Adrenal gland (tissue), 19 donors: ENCODE measurements at regions of chr7 and their contacts with region 1.

Region 1: DNA sequence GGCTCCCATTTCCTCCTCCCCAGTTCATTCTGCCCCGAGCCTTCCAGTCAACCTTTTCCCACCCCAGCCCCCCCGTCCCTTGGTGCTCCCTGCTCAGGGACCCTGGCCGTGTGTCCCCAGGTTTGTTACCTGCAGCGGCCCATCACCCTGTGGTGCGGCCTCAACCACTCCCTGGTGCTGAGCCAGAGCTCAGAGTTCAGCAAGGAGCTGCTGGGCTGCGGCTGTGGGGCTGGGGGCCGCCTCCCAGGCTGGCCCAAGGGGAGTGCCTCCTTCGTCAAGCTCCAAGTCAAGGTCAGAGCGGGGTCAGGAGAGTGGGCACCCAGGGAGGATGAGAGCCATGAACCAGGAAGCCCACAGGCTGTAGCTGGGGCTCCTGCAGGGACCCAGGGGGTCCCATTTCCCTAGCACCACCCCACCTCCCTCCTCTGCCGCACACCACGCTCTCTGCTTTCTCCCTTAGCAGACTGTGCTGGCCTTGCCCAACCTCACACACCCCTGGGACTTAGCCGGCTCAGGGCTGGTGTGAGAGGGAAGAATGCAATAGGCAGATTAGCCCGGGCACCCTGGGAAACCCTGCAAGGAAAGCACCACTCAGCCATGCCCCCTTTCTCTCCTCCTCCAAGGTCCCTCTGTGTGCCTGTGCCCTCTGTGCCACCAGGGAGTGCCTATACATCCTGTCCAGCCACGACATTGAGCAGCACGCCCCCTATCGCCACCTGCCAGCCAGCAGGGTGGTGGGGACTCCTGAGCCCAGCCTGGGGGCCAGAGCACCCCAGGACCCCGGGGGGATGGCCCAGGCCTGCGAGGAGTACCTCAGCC is 2.0 kb upstream of the PCOLCE start:
- DNase-seq: no peak
- H3K4me3 ChIP-seq: no peak overlapping the region
- H3K27ac ChIP-seq: no peak overlapping the region
- H3K4me1 ChIP-seq: peaks cover 4 to 12% of the 10 kb centered on the region in 2 donors
- H3K27me3 ChIP-seq: no peaks in the 10 kb centered on the region
- CTCF ChIP-seq: no peak
- POLR2A ChIP-seq: no peak

Region 2: DNA sequence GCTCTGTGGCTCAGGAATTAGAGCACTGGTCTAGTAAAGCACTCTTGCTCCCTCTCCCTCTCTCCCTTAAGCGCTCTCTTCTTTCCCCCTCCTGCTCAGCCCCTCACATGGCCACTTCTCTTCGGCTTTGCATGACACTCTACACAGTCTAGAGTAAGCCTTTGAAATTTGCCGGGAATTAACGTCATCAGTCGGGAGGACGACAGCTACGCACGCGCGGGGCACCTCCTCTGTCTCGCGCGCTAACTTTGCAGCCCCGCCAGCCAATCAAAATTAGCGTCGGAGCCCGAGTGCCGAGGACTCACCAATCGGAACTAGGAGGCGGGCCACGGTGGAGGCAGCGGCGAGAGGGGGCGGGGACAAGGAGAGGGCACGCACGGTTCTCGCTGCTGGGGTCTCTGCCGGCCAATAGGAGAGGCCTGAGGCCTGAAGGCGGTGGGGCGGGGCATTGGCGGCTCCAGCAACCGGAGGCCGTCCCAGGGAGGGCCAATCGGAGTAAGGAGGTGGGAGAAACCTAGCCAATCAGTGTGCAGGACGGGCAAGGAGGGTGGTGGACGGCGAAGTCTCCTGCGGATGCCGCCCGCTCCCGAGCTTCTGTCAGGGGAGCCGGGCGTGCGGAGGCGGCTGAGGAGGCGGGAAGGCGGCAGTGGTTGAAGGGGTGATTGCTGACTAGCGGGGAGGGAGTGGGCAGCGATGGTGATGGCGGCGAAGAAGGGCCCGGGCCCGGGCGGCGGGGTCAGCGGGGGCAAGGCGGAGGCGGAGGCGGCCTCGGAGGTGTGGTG is 61.3 kb before region 1 on chr7 and contains the start of gene AGFG2:
- intact Hi-C with region 1: loop called in 1 of 2 experiments (anchors 10 kb)
- DNase-seq: peak; percentile 100
- H3K4me3 ChIP-seq: peak within 1 kb of the TSS; percentile 18 to 96 (median 59)
- H3K27ac ChIP-seq: peak within 1 kb of the TSS; percentile 41 to 95 (median 54)
- H3K4me1 ChIP-seq: peaks cover 34 to 44% of the 10 kb centered on the region in 2 donors
- H3K27me3 ChIP-seq: no peaks in the 10 kb centered on the region
- CTCF ChIP-seq: no peak
- POLR2A ChIP-seq: peak; percentile 81 to 96
- total RNA-seq, gene AGFG2: 17.1 to 175 (median 142) TPM